ENCODE measurements at regions of chr16 and their contacts with region 1.

Region 1: DNA sequence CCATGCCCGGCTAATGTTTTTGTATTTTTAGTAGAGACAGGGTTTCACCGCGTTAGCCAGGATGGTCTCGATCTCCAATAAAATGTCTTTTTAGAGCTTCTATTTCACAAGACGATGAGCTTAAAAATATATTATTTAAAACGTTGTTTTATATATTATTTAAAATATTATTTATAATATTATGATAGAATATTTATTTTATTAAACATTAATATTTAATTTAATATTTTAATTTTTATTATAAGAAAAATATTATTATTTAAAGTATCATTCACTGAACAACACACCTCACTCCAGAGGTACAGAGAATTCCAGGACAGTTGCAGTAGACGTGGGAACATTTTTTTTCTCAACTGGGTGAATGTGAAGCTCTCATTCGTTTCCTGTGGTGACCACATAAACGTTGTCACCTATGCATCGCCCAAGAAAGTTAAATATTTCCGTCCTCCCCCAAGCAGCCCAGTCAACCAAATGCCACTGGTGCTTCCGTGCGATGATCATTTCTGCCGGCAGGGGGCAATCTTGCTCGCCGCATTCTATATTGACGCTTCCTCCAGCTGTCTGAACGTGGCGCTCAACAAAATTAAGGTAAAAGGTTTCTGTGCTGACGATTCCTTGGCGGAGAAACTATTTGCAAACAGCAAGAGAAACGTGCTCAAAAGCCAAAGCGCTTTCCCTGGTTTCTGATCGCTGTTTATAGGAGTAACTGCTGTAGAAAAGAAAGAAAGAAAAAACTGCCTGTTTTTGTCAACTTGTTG is 41.7 kb upstream of the PRSS54 start:
- DNase-seq: peak; percentile 89 to 92
- H3K4me3 ChIP-seq: no peak overlapping the region
- H3K4me3 Mint-ChIP-seq: peak overlapping the region; percentile 48
- H3K27ac Mint-ChIP-seq: no peak overlapping the region
- H3K4me1 ChIP-seq: no peaks in the 10 kb centered on the region
- H3K4me1 Mint-ChIP-seq: no peaks in the 10 kb centered on the region
- H3K27me3 ChIP-seq: no peaks in the 10 kb centered on the region
- H3K27me3 Mint-ChIP-seq: no peaks in the 10 kb centered on the region
- CTCF ChIP-seq: peak; percentile 93 to 95

Region 2: GRCh38 chr16:58366247-58367031 is 29.9 kb after region 1 on chr16:
- CTCF ChIA-PET with region 1: no interaction called
- POLR2A ChIA-PET with region 1: no interaction called
- intact Hi-C with region 1: no loop called
- DNase-seq: no peak
- H3K4me3 ChIP-seq: no peak overlapping the region
- H3K4me3 Mint-ChIP-seq: no peak overlapping the region
- H3K27ac Mint-ChIP-seq: no peak overlapping the region
- H3K4me1 ChIP-seq: no peaks in the 10 kb centered on the region
- H3K4me1 Mint-ChIP-seq: no peaks in the 10 kb centered on the region
- H3K27me3 ChIP-seq: no peaks in the 10 kb centered on the region
- H3K27me3 Mint-ChIP-seq: peaks cover 7% of the 10 kb centered on the region
- CTCF ChIP-seq: no peak

Region 3: DNA sequence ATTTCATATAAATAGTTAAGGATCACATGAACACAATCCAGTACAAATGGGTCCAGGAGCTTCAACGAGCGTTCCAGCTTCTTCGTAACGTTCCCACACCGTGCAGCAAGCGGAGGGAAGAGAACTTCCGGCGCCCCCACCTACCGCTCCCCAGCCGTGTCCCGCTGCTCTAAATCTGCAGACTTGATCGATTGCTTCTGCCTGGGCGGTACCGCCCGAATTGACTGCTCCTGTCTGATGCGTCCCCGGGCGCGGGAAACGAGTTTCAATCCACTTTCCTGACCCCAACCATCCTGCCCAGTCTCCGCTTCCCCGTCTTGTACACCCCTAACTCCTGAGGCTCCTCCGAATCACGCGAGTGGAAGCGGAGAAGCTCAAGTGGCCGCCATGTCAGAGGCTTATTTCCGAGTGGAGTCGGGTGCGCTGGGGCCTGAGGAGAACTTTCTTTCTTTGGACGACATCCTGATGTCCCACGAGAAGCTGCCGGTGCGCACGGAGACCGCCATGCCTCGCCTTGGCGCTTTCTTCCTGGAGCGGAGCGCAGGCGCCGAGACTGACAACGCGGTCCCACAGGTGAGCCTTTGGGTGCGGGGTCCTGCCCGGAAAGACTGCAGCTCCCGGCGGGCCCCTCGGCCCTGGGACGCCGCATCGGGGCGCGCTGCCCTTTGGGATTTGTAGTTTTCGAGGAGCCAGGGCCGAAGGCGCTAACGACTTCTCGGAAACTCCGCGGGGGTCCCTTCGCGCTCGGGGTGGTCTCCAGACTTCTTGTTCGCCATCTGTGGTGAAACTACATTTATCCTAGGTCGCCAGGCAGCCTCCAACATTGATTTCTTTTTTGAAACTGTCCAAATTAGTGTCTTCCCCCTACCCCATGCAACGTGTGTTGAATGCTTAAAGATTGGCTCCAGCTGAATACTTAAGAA is 56.0 kb after region 1 on chr16 and contains the start of gene GINS3:
- CTCF ChIA-PET with region 1: no interaction called
- POLR2A ChIA-PET with region 1: interaction called, 11 read pairs
- intact Hi-C with region 1: no loop called
- DNase-seq: peak; percentile 95 to 96
- H3K4me3 ChIP-seq: peak within 1 kb of the TSS; percentile 82
- H3K4me3 Mint-ChIP-seq: peak within 1 kb of the TSS; percentile 98
- H3K27ac Mint-ChIP-seq: peak within 1 kb of the TSS; percentile 97
- H3K4me1 ChIP-seq: no peaks in the 10 kb centered on the region
- H3K4me1 Mint-ChIP-seq: no peaks in the 10 kb centered on the region
- H3K27me3 ChIP-seq: no peaks in the 10 kb centered on the region
- H3K27me3 Mint-ChIP-seq: peaks cover 9% of the 10 kb centered on the region
- CTCF ChIP-seq: no peak
- total RNA-seq, gene GINS3: 14.2 and 15.2 TPM in 2 replicates

Region 4: GRCh38 chr16:58451945-58452401 is 115.5 kb after region 1 on chr16:
- CTCF ChIA-PET with region 1: interaction called, 6 read pairs
- POLR2A ChIA-PET with region 1: no interaction called
- intact Hi-C with region 1: loop called (anchors 1 kb)
- DNase-seq: peak in 1 of 2 experiments; percentile 49
- H3K4me3 ChIP-seq: no peak overlapping the region
- H3K4me3 Mint-ChIP-seq: no peak overlapping the region
- H3K27ac Mint-ChIP-seq: no peak overlapping the region
- H3K4me1 ChIP-seq: peaks cover 33% of the 10 kb centered on the region
- H3K4me1 Mint-ChIP-seq: peaks cover 25% of the 10 kb centered on the region
- H3K27me3 ChIP-seq: no peaks in the 10 kb centered on the region
- H3K27me3 Mint-ChIP-seq: no peaks in the 10 kb centered on the region
- CTCF ChIP-seq: no peak

Region 5: DNA sequence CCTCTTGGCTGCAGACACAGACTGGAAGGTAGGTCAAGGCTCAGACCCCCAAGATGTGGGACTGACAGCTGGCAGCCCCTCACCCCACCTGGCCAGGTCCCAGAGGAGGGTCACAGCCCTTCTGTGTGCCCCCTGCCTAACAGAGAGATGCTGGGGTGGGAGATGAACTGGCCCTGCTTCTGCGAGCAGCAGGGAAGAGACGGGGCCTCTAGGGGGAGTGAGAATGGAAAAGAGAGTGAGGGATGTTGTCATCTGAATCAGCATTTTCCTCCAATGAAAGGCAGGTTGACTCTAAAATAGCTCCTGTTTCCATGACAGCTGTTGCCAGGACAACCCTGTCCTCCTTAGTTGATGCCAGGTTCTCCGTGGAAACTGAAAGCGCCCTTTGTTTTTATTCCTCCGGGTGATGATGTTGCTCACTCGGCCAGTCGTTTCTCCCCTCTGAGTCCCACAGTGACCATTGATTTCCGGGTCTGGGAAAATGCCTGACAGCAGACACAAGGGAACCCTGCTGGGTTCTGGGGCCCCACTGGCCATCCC is 158.5 kb after region 1 on chr16:
- CTCF ChIA-PET with region 1: interaction called, 5 read pairs
- POLR2A ChIA-PET with region 1: no interaction called
- intact Hi-C with region 1: loop called (anchors 5 kb)
- DNase-seq: peak; percentile 87 to 90
- H3K4me3 ChIP-seq: no peak overlapping the region
- H3K4me3 Mint-ChIP-seq: no peak overlapping the region
- H3K27ac Mint-ChIP-seq: peak overlapping the region; percentile 80
- H3K4me1 ChIP-seq: peaks cover under 1% of the 10 kb centered on the region
- H3K4me1 Mint-ChIP-seq: no peaks in the 10 kb centered on the region
- H3K27me3 ChIP-seq: no peaks in the 10 kb centered on the region
- H3K27me3 Mint-ChIP-seq: peaks cover 4% of the 10 kb centered on the region
- CTCF ChIP-seq: peak; percentile 40 to 67

Region 6: DNA sequence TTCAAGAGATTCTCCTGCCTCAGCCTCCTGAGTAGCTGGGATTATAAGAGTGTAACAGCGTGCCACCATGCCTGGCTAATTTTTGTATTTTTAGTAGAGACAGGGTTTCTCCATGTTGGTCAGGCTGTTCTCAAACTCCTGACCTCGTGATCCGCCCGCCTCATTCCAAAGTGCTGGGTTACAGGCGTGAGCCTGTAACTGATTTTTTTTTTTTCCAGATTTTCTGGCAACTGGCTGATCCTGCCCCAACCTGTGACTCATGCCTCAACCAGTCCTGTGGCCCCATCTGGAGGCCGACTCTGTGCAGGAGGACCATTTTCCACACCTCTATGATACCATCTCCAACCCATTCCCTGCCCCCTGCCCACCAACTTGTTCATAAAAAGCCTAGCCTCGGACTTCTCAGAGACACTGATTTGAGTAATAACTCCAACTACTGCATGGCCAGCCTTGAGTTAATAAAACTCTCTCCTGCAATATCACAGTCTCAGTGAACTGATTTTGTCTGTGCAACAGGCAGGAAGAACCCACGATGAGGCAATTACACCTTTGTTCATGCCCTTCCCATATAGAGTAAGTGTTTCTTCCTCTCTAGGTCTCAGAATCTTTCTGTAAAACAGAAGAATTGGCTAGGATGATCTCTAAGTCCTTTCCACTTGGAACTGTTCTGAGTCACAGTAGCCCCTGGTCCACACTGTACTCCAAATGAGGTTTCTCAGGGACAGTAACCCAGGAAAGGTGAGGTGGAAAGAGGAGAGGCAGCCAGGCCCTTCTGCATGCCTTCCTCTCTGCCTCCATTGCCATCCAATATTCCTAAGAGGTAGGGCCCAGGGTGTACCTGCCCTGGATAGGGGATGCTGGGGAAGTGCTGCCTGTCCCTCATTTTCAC is 301.9 kb after region 1 on chr16:
- CTCF ChIA-PET with region 1: no interaction called
- POLR2A ChIA-PET with region 1: no interaction called
- intact Hi-C with region 1: loop called (anchors 1 kb)
- DNase-seq: peak; percentile 86 to 87
- H3K4me3 ChIP-seq: no peak overlapping the region
- H3K4me3 Mint-ChIP-seq: peak overlapping the region; percentile 6
- H3K27ac Mint-ChIP-seq: peak overlapping the region; percentile 73
- H3K4me1 ChIP-seq: peaks cover 30% of the 10 kb centered on the region
- H3K4me1 Mint-ChIP-seq: peaks cover 30% of the 10 kb centered on the region
- H3K27me3 ChIP-seq: no peaks in the 10 kb centered on the region
- H3K27me3 Mint-ChIP-seq: no peaks in the 10 kb centered on the region
- CTCF ChIP-seq: peak; percentile 49 to 83

Measured in Caco-2 (cell line).